Activated CD8-positive, alpha-beta memory T cell treated with anti-CD3 and anti-CD28 coated beads, Interleukin-2, amount 10 ng/mL, durations not matched to agents 7 days and 5 days (primary cell): ENCODE measurements at regions of chr2 and their contacts with region 1.

Region 1: GRCh38 chr2:85728883-85729824 is 24.6 kb upstream of the ATOH8 start:
- DNase-seq: peak; percentile 81
- ATAC-seq: peak; percentile 93
- H3K4me3 Mint-ChIP-seq: no peak overlapping the region
- H3K27ac Mint-ChIP-seq: no peak overlapping the region
- H3K4me1 Mint-ChIP-seq: peaks cover 9% of the 10 kb centered on the region
- H3K27me3 Mint-ChIP-seq: peaks cover 41% of the 10 kb centered on the region

Region 2: DNA sequence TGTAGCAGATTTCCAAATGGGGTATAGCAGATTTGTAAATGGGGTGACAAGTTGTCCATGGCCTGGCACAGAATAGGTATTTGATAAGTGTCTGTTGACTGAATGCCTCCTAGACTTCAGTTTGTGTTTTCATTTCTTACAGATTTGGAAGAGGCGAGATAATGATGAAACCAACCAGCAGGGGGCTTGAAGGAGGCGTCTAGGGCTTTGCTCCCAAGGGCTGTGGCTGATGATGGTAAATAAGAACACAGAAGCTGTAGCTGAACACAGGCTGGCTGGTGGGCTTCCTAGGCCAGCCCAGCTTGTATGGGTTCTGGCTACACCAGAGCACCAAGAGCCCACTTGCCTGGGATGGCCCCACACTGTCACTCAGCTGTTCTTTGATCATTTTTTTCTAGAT is 80.5 kb before region 1 on chr2:
- CTCF ChIA-PET with region 1: interaction called, 11 read pairs
- DNase-seq: peak; percentile 45
- ATAC-seq: peak; percentile 60
- H3K4me3 Mint-ChIP-seq: no peak overlapping the region
- H3K27ac Mint-ChIP-seq: peak overlapping the region; percentile 22
- H3K4me1 Mint-ChIP-seq: peaks cover 5% of the 10 kb centered on the region
- H3K27me3 Mint-ChIP-seq: no peaks in the 10 kb centered on the region

Region 3: GRCh38 chr2:85712849-85713602 is 16.1 kb before region 1 on chr2:
- CTCF ChIA-PET with region 1: interaction called, 31 read pairs
- DNase-seq: no peak
- ATAC-seq: no peak
- H3K4me3 Mint-ChIP-seq: no peak overlapping the region
- H3K27ac Mint-ChIP-seq: no peak overlapping the region
- H3K4me1 Mint-ChIP-seq: peaks cover 36% of the 10 kb centered on the region
- H3K27me3 Mint-ChIP-seq: peaks cover 26% of the 10 kb centered on the region

Region 4: DNA sequence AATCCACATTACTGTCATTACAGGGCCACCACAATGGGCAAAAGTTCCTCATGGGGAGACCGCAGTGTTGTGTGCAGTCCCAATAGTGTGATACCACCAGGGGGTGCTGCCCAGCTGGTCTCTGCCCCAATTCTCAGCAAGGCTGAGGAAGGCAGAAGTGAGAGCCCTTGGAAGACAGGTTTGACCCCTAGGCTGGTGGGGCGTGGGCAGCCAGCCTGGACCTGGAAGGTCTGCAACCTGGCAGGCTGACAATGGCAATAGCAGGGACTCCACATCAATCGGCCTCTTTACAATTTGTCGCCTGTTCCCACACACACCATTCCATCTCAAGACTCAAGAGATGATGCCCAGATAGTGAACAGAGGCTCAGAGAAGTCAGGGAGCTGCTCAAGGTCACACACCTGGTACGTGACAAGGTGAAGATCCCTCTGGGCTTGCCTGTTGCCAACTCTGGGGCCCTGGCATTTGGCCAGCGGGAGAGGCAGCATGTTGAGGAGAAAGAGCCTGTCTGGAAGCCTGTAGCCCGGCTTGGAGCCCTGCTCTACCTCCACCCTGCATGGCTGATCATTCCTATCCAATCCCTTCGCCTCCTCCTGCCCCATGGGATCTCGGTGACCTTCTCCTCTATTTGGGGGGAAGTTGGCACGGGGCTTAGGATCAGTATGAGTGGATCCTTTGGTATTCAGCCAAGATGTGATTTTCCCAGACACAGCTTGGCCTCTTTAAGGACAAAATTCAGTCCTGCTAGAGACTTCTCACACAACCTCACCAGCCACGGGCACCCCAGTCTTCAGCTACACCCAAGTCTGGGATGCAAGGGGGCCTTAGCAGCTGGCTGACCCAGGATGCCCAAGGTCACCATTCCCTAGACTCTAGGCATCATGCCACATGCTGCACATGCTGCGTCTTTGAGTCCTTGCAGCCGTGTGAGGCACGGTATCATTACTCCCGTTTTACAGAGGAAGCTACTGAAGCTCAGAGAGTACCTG is 21.7 kb after region 1 on chr2:
- CTCF ChIA-PET with region 1: interaction called, 35 read pairs
- DNase-seq: peak; percentile 72
- ATAC-seq: peak; percentile 45
- H3K4me3 Mint-ChIP-seq: no peak overlapping the region
- H3K27ac Mint-ChIP-seq: no peak overlapping the region
- H3K4me1 Mint-ChIP-seq: peaks cover 13% of the 10 kb centered on the region
- H3K27me3 Mint-ChIP-seq: peaks cover 75% of the 10 kb centered on the region

Region 5: DNA sequence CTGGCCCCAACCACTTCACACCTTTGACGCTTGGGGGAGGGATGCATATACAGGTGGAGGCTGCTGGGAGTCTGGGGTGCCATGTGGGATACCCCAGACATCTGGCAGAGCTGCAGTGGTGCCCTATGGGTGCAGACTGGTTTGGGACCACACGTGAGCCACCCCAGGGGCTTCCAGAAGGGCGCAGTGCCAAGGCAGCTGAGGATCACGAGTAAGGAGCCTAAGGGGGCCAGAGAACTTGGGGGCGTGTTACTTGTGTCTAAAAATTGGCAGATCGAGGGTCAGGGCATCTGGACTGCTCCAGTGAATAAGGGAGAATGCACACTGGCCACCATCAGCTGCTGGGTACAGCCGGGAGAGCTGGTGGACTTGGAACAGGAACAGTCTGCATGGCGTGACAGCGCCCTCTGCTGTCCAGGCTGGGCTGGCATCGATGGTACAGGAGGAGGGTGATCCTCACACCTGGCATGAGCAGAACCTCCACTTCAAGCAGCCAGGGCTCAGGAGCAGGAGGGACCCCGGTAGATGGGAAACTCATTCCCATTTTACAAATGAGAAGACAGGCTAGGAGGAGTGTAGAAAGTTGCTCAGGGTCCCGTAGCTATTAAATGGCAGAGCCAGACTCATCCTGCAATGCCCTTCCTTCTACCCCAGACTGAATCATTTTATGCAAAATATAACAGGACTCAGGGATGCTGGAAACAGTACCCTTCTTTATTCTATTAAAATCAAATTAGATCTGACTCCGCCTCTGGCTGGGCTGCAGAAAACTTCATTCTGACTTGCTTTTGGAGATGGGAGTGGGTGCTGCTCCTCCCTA is 85.0 kb after region 1 on chr2:
- CTCF ChIA-PET with region 1: interaction called, 93 read pairs
- DNase-seq: peak; percentile 89
- ATAC-seq: peak; percentile 98
- H3K4me3 Mint-ChIP-seq: no peak overlapping the region
- H3K27ac Mint-ChIP-seq: no peak overlapping the region
- H3K4me1 Mint-ChIP-seq: no peaks in the 10 kb centered on the region
- H3K27me3 Mint-ChIP-seq: peaks cover 26% of the 10 kb centered on the region